Endothelial cell of umbilical vein (primary cell): ENCODE measurements at regions of chr4 and their contacts with region 1.

Region 1: GRCh38 chr4:147096667-147097604 is 151.3 kb upstream of the TTC29 start:
- DNase-seq: peak; percentile 63
- H3K4me3 ChIP-seq: no peak overlapping the region
- H3K27ac ChIP-seq: no peak overlapping the region
- H3K4me1 ChIP-seq: no peaks in the 10 kb centered on the region
- H3K27me3 ChIP-seq: peaks cover 9 to 19% of the 10 kb centered on the region in 2 experiments
- CTCF ChIP-seq: peak; percentile 26 to 32
- POLR2A ChIP-seq: no peak

Region 2: GRCh38 chr4:146916479-146917076 is 180.4 kb before region 1 on chr4:
- CTCF ChIA-PET with region 1: interaction called, 8 read pairs
- POLR2A ChIA-PET with region 1: no interaction called
- dilution Hi-C with region 1: no loop called
- intact Hi-C with region 1: loop called (anchors 10 kb)
- DNase-seq: peak; percentile 72
- H3K4me3 ChIP-seq: no peak overlapping the region
- H3K27ac ChIP-seq: no peak overlapping the region
- H3K4me1 ChIP-seq: no peaks in the 10 kb centered on the region
- H3K27me3 ChIP-seq: peaks cover 0 to 19% of the 10 kb centered on the region in 2 experiments
- CTCF ChIP-seq: peak; percentile 39 to 49
- POLR2A ChIP-seq: no peak

Region 3: DNA sequence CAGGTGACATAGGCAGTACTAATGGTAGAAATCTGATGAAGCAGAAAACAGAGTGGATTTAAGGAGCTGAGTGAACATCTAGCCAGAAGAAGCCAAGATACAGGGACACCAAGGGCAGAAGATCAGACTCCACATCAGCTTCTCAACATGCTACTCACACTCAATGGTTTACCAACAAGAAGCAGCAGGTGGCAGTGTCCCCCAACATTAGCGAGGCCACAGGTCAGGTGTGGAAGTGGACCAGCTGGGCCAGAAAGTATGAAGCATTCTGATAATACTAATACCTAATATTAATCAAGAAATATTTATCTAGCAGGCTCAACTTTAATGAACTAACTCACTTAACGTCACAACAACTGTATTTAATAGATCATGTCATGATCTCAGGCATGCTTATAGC is 77.9 kb before region 1 on chr4:
- CTCF ChIA-PET with region 1: interaction called, 447 read pairs
- POLR2A ChIA-PET with region 1: no interaction called
- dilution Hi-C with region 1: no loop called
- intact Hi-C with region 1: loop called (anchors 1 kb)
- DNase-seq: peak; percentile 62
- H3K4me3 ChIP-seq: no peak overlapping the region
- H3K27ac ChIP-seq: no peak overlapping the region
- H3K4me1 ChIP-seq: no peaks in the 10 kb centered on the region
- H3K27me3 ChIP-seq: peaks cover 7% of the 10 kb centered on the region in 2 experiments
- CTCF ChIP-seq: peak; percentile 52 to 66
- POLR2A ChIP-seq: no peak

Region 4: DNA sequence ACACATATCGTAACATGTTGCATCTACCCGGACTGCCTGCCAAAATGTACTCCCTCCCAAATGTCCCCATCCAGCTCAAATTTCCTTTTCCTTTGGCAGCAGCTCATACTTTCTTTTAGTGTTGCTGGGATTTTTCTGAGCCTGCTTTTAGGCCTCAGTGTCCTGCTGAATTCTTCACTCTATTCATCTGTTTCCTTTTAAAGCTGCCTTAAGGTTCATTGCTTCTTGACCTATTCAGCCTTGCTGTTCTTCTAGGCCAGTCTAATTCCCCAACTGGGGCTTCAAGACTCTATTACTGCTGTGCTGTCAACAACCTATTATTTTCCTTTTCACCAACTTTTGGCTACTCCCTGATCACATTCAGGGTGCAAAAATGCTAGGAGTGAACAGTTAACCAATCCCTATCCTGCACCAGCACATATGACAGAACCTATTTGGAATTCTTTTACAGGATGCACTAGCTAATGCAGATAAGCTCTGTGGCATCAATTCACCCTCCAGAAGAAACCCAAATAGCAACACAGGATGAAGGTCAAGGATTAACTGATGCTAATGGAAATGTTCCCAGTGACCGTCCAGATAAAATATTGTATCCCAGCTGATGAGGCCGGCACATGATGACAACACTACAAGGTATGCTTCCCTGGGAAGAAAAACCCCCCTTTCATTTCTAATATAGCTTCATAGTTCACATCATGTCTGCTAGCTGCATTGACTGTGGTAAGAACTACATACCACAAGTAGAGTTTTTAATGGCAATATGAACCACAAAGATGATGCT is 36.6 kb before region 1 on chr4:
- CTCF ChIA-PET with region 1: interaction called, 23 read pairs
- POLR2A ChIA-PET with region 1: no interaction called
- dilution Hi-C with region 1: no loop called
- intact Hi-C with region 1: no loop called
- DNase-seq: no peak
- H3K4me3 ChIP-seq: no peak overlapping the region
- H3K27ac ChIP-seq: no peak overlapping the region
- H3K4me1 ChIP-seq: peaks cover 9% of the 10 kb centered on the region
- H3K27me3 ChIP-seq: peaks cover 0 to 7% of the 10 kb centered on the region in 2 experiments
- CTCF ChIP-seq: no peak
- POLR2A ChIP-seq: no peak

Region 5: DNA sequence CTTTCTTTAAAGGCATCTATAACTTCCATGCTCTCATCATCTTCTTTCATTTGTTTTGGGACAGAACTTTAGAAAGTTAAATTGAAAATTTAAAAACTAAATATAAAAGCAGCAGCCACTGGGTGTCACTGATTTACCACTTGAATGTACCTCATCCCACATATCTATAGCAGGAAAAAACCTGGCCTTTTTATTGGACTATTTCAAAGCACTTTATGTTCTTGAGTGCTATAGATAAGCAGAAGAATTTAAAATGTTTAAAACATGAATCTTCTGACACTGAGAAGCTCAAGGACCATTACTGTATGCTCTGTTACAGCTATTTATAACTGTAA is 14.1 kb after region 1 on chr4:
- CTCF ChIA-PET with region 1: interaction called, 24 read pairs
- POLR2A ChIA-PET with region 1: no interaction called
- dilution Hi-C with region 1: no loop called
- intact Hi-C with region 1: no loop called
- DNase-seq: peak; percentile 5
- H3K4me3 ChIP-seq: no peak overlapping the region
- H3K27ac ChIP-seq: no peak overlapping the region
- H3K4me1 ChIP-seq: no peaks in the 10 kb centered on the region
- H3K27me3 ChIP-seq: no peaks in the 10 kb centered on the region
- CTCF ChIP-seq: no peak
- POLR2A ChIP-seq: no peak